ENCODE measurements at regions of chr12 and their contacts with region 1.

Region 1: DNA sequence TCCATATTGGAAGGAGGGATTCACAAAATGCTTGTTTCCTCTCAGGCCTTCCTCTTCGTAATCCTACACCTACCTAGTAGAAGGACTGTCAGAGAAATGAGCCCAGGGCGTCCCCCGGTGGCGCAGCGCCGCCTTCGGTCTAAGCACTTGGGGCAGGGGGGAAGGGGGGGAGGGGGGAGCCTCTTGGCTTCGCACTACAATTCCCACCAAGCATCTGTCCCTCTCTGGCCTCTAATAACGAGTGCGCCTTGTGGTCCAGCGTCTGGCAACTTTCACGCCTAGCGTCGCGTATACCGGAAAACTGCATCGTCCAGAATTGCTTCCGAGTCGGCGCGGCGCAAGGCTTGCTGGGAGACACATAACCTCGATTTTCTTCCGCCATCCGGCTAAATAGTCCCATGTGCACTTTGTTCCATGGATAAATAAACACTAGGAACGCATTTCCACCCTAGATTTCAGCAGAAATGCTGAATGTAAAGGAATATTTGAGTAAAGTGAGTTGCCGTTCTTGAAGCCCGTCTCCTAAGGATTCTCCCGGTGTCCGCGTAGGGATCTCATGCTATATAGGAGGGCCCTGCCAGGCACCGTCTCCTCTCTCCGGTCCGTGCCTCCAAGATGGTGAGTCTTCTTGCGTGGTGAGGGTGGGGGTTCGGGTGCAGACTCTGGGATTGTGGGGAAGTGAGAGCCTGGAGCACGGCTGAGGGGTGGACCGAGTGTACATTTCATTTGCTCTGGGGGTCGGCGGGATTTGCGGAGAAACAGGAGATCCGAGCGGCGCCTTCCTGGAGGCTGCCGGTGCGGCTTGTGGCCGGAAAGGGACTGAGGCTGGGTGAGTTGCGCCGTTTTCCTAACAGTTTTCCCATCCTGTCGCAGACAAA is at the start of gene RPS26:
- DNase-seq: peak; percentile 99
- ATAC-seq: peak; percentile 93
- H3K4me3 ChIP-seq: peak within 1 kb of the TSS; percentile 70 to 99 (median 91)
- H3K4me3 Mint-ChIP-seq: peak within 1 kb of the TSS; percentile 98
- H3K27ac ChIP-seq: peak within 1 kb of the TSS; percentile 82 to 90
- H3K27ac Mint-ChIP-seq: peak within 1 kb of the TSS; percentile 97
- H3K4me1 ChIP-seq: peaks cover 19 to 21% of the 10 kb centered on the region in 2 donors
- H3K4me1 Mint-ChIP-seq: peaks cover 24% of the 10 kb centered on the region
- H3K27me3 ChIP-seq: no peaks in the 10 kb centered on the region
- H3K27me3 Mint-ChIP-seq: no peaks in the 10 kb centered on the region
- CTCF ChIP-seq: peak; percentile 67
- total RNA-seq, gene RPS26: 19.4 and 21.0 TPM in 2 replicates

Region 2: DNA sequence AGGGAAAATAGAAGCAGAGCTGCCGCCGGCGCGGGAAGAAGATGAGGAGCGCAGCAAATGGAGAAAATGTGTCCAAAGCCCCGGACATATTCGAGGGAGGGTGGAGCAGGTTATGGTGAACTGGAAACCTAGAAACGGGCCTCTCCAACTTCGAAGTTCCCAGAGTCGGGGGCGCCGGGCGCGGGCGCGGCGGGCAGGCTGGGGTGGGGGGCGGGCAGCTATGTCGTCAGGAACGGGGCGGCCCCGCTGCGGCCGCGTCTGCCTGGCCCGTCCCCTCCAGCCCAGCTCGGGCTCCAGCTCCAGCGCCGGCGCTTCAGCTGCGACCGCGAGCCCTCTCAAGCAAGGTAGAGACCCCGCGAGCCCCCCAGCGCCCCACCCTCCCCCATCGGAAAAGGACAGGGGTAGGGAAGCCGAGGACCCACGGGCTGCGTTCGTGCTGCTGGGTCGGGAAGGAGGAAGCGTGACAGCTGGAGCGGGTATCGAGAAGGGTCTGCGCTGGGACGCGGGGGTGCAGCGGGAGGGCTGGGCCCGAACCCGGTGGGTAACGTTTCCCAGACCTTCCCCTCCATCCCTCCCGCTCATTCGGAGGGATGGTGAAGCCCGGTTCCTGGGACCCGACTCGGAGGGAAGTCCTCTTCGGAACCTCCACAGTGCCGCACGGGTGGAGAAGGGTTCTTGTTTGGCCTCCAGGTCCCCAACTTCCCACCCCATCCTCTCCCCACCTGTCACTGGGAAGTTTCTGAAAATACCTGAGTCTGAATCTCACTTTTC is 109.8 kb before region 1 on chr12:
- CTCF ChIA-PET with region 1: interaction called, 11 read pairs
- POLR2A ChIA-PET with region 1: interaction called, 7 read pairs
- intact Hi-C with region 1: loop called (anchors 1 kb)
- DNase-seq: peak; percentile 45
- ATAC-seq: no peak
- H3K4me3 ChIP-seq: peak overlapping the region; percentile 84 to 94 (median 93)
- H3K4me3 Mint-ChIP-seq: peak overlapping the region; percentile 94
- H3K27ac ChIP-seq: peak overlapping the region; percentile 83 to 92
- H3K27ac Mint-ChIP-seq: peak overlapping the region; percentile 95
- H3K4me1 ChIP-seq: peaks cover 45 to 59% of the 10 kb centered on the region in 2 donors
- H3K4me1 Mint-ChIP-seq: peaks cover 63% of the 10 kb centered on the region
- H3K27me3 ChIP-seq: no peaks in the 10 kb centered on the region
- H3K27me3 Mint-ChIP-seq: no peaks in the 10 kb centered on the region
- CTCF ChIP-seq: no peak

Measured in B cell (primary cell).